ENCODE measurements at regions of chr2 and their contacts with region 1.

Region 1: GRCh38 chr2:38653715-38654527 is 12.0 kb upstream of the GALM start:
- DNase-seq: peak; percentile 83
- H3K4me3 Mint-ChIP-seq: peak overlapping the region; percentile 43
- H3K27ac Mint-ChIP-seq: peak overlapping the region; percentile 90
- H3K4me1 Mint-ChIP-seq: peaks cover 37% of the 10 kb centered on the region
- H3K27me3 Mint-ChIP-seq: no peaks in the 10 kb centered on the region

Region 2: DNA sequence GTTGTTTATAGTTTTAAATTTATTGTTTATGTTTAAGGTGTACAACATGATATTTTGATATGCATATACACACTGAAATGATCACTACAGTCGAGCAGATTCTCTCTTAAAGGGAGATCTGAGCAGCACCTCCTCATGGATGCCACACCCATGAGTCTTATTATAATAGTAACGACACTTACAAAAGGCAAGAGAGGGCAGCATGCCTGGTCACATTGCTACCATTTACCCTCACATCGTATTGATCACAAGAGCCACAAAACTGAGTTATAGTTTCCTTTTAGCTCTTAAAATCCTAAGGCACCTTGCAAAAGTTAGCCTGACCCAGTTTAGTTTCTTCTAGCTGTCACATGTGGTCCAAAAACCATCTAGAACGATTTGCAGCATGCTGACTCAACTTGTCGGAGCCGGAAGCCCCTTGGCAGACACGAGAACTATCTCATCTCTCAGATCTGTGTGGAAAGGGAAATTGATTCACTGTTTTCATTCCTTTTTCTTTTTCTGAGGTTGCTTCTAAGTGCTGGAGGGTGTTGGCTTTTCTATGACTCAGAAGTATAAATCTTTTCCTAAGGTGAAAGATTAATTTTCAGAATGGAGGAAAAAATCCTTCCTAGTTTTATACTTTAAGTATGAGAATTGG is 1067.8 kb before region 1 on chr2:
- CTCF ChIA-PET with region 1: no interaction called
- intact Hi-C with region 1: loop called (anchors 5 kb)
- DNase-seq: peak; percentile 85
- H3K4me3 Mint-ChIP-seq: peak overlapping the region; percentile 25
- H3K27ac Mint-ChIP-seq: peak overlapping the region; percentile 67
- H3K4me1 Mint-ChIP-seq: peaks cover 76% of the 10 kb centered on the region
- H3K27me3 Mint-ChIP-seq: no peaks in the 10 kb centered on the region

Region 3: GRCh38 chr2:38610851-38611801 is 42.8 kb before region 1 on chr2:
- CTCF ChIA-PET with region 1: interaction called, 19 read pairs
- intact Hi-C with region 1: loop called (anchors 1 kb)
- DNase-seq: peak; percentile 40
- H3K4me3 Mint-ChIP-seq: no peak overlapping the region
- H3K27ac Mint-ChIP-seq: no peak overlapping the region
- H3K4me1 Mint-ChIP-seq: peaks cover 68% of the 10 kb centered on the region
- H3K27me3 Mint-ChIP-seq: no peaks in the 10 kb centered on the region

Region 4: GRCh38 chr2:38665854-38666555 is 12.1 kb after region 1 on chr2 and contains the start of gene GALM:
- CTCF ChIA-PET with region 1: interaction called, 67 read pairs
- intact Hi-C with region 1: loop called (anchors 1 kb)
- DNase-seq: peak; percentile 68
- H3K4me3 Mint-ChIP-seq: peak within 1 kb of the TSS; percentile 83
- H3K27ac Mint-ChIP-seq: peak within 1 kb of the TSS; percentile 97
- H3K4me1 Mint-ChIP-seq: peaks cover 69% of the 10 kb centered on the region
- H3K27me3 Mint-ChIP-seq: no peaks in the 10 kb centered on the region
- total RNA-seq, gene GALM: 31.3 to 31.9 TPM

Region 5: GRCh38 chr2:38697125-38697840 is 43.4 kb after region 1 on chr2:
- CTCF ChIA-PET with region 1: no interaction called
- intact Hi-C with region 1: loop called (anchors 1 kb)
- DNase-seq: peak; percentile 59
- H3K4me3 Mint-ChIP-seq: no peak overlapping the region
- H3K27ac Mint-ChIP-seq: peak overlapping the region; percentile 86
- H3K4me1 Mint-ChIP-seq: peaks cover 72% of the 10 kb centered on the region
- H3K27me3 Mint-ChIP-seq: no peaks in the 10 kb centered on the region

Region 6: DNA sequence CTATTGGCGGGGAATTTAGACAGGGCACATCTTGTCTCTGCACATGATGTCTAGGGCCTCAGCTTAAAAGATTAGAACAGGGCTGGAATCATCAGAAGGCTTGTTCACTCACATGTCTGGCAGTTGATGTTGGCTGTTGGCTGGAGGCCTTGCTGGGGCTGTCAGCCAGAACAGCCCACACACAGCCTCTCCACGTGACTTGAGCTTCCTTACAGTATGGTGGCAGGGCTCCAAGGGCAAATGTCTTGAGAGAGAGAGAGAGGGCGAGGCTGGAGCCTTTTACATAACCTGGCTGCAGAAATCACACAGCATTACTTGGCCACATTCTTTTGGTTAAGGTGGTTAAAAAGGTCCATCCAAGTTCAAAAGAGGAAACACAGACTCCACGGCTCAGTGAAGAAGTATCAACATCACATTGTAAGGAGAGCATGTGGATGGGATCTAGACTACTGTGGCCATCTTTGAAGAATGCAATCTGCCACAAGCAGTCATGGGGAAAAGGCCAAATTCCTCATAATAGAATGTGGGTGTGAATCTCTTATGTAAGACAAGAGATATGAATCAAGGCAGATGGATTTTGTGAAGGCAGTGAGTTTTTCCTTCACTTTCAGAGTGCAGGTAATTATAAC is 66.8 kb after region 1 on chr2:
- CTCF ChIA-PET with region 1: interaction called, 18 read pairs
- intact Hi-C with region 1: loop called (anchors 1 kb)
- DNase-seq: no peak
- H3K4me3 Mint-ChIP-seq: peak overlapping the region; percentile 11
- H3K27ac Mint-ChIP-seq: peak overlapping the region; percentile 86
- H3K4me1 Mint-ChIP-seq: peaks cover 65% of the 10 kb centered on the region
- H3K27me3 Mint-ChIP-seq: no peaks in the 10 kb centered on the region